MCF 10A (cell line): ENCODE measurements at regions of chr3 and their contacts with region 1.

Region 1: DNA sequence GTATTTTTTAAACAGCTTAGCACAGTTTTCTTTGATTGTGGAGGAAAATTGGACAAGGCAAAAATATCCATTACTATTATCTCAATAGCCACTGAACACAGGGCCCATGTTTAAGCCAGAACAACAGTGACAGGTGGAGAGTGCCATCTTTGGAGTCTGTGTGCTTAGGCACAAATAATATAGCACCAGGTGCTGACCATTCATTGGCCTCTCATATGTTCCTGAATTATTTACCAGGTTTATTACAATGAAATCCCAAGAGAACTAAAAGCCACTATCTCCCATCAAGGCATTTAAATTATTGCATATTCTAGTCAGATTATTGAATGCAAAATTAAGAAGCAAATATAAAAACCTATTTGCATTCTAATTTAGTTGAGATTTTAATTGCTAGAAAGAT is 39.6 kb downstream of the GPR156 start:
- DNase-seq: no peak
- H3K4me3 Mint-ChIP-seq: no peak overlapping the region
- H3K27ac Mint-ChIP-seq: no peak overlapping the region
- H3K4me1 Mint-ChIP-seq: no peaks in the 10 kb centered on the region
- H3K27me3 Mint-ChIP-seq: no peaks in the 10 kb centered on the region
- CTCF ChIP-seq: no peak

Region 2: GRCh38 chr3:120274739-120275167 is 29.4 kb after region 1 on chr3:
- CTCF ChIA-PET with region 1: interaction called, 23 read pairs
- POLR2A ChIA-PET with region 1: no interaction called
- intact Hi-C with region 1: no loop called
- DNase-seq: no peak
- H3K4me3 Mint-ChIP-seq: no peak overlapping the region
- H3K27ac Mint-ChIP-seq: no peak overlapping the region
- H3K4me1 Mint-ChIP-seq: no peaks in the 10 kb centered on the region
- H3K27me3 Mint-ChIP-seq: peaks cover 7% of the 10 kb centered on the region
- CTCF ChIP-seq: no peak

Region 3: GRCh38 chr3:120348981-120349818 is 103.8 kb after region 1 on chr3 and contains the start of gene LRRC58:
- CTCF ChIA-PET with region 1: interaction called, 14 read pairs
- POLR2A ChIA-PET with region 1: interaction called, 5 read pairs
- intact Hi-C with region 1: loop called (anchors 1 kb)
- DNase-seq: peak; percentile 95
- H3K4me3 Mint-ChIP-seq: peak within 1 kb of the TSS; percentile 77
- H3K27ac Mint-ChIP-seq: peak within 1 kb of the TSS; percentile 83
- H3K4me1 Mint-ChIP-seq: peaks cover 34% of the 10 kb centered on the region
- H3K27me3 Mint-ChIP-seq: no peaks in the 10 kb centered on the region
- CTCF ChIP-seq: peak; percentile 8
- total RNA-seq, gene LRRC58: 25.8 and 28.8 TPM in 2 replicates

Region 4: DNA sequence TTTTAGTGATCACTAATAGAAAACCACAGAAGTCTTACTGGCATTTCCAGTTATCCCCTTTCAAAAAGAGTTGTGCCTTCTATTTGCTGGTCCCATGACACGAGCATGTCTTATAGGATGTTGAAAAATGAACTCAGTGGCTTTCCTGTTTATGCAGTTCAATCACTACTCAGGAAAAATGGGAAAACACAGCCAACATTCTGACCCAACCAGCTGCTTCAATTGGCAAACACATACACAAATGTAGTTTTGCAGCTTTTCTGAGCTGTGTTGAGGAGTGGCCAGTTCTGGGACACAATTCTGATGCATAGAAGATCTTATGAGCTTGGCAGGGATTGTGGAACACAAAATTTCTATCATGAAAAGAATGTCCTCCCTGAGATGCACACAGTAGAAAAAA is 165.2 kb after region 1 on chr3:
- CTCF ChIA-PET with region 1: interaction called, 148 read pairs
- POLR2A ChIA-PET with region 1: no interaction called
- intact Hi-C with region 1: no loop called
- DNase-seq: no peak
- H3K4me3 Mint-ChIP-seq: no peak overlapping the region
- H3K27ac Mint-ChIP-seq: no peak overlapping the region
- H3K4me1 Mint-ChIP-seq: no peaks in the 10 kb centered on the region
- H3K27me3 Mint-ChIP-seq: no peaks in the 10 kb centered on the region
- CTCF ChIP-seq: no peak

Region 5: DNA sequence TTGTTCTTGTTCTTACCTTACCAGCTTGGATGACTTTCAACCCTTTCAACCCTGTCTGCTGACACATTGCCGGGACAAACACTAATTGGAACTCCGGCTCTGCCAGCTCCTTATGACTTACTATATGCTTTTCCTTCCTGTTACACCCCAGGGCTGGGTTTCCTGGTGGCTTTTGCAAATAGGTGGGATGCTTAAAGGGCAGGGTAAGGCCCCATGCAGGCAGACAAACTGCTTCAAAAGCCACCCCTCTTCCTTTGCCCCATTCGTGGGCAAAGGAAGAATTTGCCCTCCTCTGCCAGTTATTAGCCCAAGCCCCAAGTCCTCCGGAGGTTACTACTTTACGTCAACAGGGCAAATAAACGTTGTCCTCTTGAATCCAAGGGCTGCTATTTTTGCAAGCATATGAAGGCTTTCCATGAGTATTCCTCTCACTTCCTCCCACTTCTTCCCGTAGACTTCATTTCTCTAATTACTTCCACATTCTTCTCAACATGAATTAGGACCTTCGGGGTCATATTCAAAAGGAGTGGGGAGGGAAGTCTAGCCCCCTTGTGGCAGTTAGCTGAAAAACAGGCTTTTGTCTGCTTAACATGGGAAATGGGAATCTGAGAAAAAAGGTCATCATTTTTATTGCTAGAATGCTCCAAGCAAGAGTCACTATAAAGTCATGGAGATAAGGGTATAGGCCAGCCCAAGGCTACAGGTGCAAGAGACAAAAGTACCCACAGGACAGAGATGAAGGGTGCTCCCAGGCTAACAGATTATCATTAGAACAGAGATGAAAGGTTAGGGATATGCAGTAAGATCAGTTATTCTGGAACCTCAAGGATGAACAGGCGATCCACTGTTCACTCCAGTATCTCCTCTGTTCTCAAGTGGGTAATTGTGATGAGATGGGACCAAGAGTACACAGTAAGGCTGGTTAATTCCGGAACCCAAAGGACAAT is 261.7 kb after region 1 on chr3:
- CTCF ChIA-PET with region 1: interaction called, 8 read pairs
- POLR2A ChIA-PET with region 1: no interaction called
- intact Hi-C with region 1: loop called (anchors 1 kb)
- DNase-seq: peak; percentile 59
- H3K4me3 Mint-ChIP-seq: no peak overlapping the region
- H3K27ac Mint-ChIP-seq: no peak overlapping the region
- H3K4me1 Mint-ChIP-seq: peaks cover 17% of the 10 kb centered on the region
- H3K27me3 Mint-ChIP-seq: no peaks in the 10 kb centered on the region
- CTCF ChIP-seq: peak; percentile 61

Region 6: GRCh38 chr3:120567370-120568201 is 322.2 kb after region 1 on chr3:
- CTCF ChIA-PET with region 1: interaction called, 13 read pairs
- POLR2A ChIA-PET with region 1: no interaction called
- intact Hi-C with region 1: no loop called
- DNase-seq: peak; percentile 45
- H3K4me3 Mint-ChIP-seq: peak overlapping the region; percentile 49
- H3K27ac Mint-ChIP-seq: peak overlapping the region; percentile 29
- H3K4me1 Mint-ChIP-seq: no peaks in the 10 kb centered on the region
- H3K27me3 Mint-ChIP-seq: no peaks in the 10 kb centered on the region
- CTCF ChIP-seq: peak; percentile 6